ENCODE measurements at regions of chr9 and their contacts with region 1.

Region 1: GRCh38 chr9:72364679-72365524 is at the start of gene ZFAND5:
- DNase-seq: peak; percentile 100
- ATAC-seq: peak; percentile 88 to 93 (median 90)
- H3K4me3 ChIP-seq: peak within 1 kb of the TSS; percentile 84
- H3K27ac ChIP-seq: peak within 1 kb of the TSS; percentile 99
- H3K4me1 ChIP-seq: peaks cover 12% of the 10 kb centered on the region
- H3K27me3 ChIP-seq: no peaks in the 10 kb centered on the region
- CTCF ChIP-seq: no peak
- total RNA-seq, gene ZFAND5: 466 to 795 (median 548) TPM

Region 2: DNA sequence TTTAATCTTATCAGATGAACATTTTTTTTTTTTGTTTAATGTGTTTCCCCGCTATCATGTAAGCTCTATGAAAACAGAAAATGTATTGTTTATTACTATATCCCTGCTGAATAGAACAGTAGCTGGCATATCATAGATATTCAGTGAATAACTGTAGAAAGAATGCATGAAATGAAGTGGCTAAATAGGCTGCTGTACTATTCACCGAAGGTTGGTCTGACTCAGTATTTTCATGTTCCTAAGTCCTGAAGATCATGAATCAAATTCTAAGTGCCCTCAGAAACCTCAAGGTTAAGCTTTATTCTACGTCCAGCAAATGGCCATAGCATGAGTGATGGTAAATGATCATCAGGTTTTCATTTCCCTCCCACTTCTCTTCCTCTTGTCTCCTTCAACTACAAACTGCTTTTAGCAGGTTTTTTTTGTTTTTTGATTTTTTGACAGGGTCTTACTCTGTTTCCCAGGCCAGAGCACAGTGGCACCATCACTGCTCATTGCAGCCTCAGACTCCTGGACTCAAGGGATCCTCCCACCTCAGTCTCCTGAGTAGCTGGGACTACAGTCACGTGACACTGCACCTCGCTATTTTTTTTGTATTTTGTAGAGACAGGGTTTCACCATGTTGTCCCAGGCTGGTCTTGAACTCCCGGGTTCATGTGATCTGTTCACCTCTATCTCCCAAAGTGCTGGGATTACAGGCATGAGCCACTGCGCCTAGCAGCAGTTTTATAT is 19.2 kb after region 1 on chr9:
- intact Hi-C with region 1: no loop called
- DNase-seq: no peak
- ATAC-seq: no peak
- H3K4me3 ChIP-seq: no peak overlapping the region
- H3K27ac ChIP-seq: no peak overlapping the region
- H3K4me1 ChIP-seq: no peaks in the 10 kb centered on the region
- H3K27me3 ChIP-seq: no peaks in the 10 kb centered on the region
- CTCF ChIP-seq: no peak

Region 3: GRCh38 chr9:72526901-72527800 is 162.2 kb after region 1 on chr9:
- intact Hi-C with region 1: loop called in 1 of 2 experiments (anchors 5 kb)
- DNase-seq: peak; percentile 74 to 83
- ATAC-seq: peak; percentile 94 to 99 (median 96)
- H3K4me3 ChIP-seq: peak overlapping the region; percentile 52
- H3K27ac ChIP-seq: peak overlapping the region; percentile 67
- H3K4me1 ChIP-seq: peaks cover 16% of the 10 kb centered on the region
- H3K27me3 ChIP-seq: no peaks in the 10 kb centered on the region
- CTCF ChIP-seq: no peak

Region 4: DNA sequence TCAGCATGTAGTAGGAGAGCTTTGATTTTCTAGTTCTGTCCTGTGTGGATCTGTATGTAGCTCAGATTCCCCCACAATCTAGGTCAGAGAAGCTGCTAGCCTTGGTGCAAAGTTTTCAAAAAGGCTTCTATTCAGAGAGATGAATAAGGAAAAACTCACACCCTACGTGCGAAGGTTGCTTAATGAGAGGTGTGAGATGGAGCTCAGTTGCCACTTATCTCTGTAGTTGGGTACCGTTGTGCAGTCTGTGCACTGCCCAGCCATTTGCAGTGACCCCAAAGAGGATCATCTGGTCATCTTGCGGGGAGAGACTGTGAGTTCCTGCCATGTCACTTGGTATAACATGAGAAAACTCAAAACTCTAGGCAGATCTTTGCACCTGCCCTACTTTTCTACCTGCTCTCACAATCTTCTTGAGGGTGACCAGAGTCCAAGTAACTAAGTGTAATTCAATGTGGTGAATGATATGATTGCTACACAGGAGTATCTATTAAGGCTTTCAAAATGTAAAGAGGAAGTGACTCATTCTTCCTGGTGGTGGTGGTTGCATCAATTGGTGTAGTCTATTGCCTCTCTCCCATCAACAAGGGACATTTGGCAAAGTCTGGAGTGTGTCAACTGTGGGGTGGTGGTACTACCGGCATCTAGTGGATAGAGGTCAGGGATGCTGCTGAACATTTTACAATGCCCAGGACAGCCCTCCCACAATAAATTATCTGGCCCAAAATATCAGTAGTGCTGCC is 221.7 kb after region 1 on chr9:
- intact Hi-C with region 1: loop called in 1 of 2 experiments (anchors 2 kb)
- DNase-seq: no peak
- ATAC-seq: peak; percentile 79 to 93 (median 86)
- H3K4me3 ChIP-seq: no peak overlapping the region
- H3K27ac ChIP-seq: peak overlapping the region; percentile 78
- H3K4me1 ChIP-seq: peaks cover 21% of the 10 kb centered on the region
- H3K27me3 ChIP-seq: no peaks in the 10 kb centered on the region
- CTCF ChIP-seq: no peak